ENCODE measurements at regions of chr19 and their contacts with region 1.

Region 1: GRCh38 chr19:8389891-8390616 is at the start of gene RAB11B:
- DNase-seq: peak; percentile 100
- ATAC-seq: peak; percentile 93
- H3K4me3 ChIP-seq: peak within 1 kb of the TSS; percentile 62 to 95
- H3K27ac ChIP-seq: peak within 1 kb of the TSS; percentile 100
- H3K4me1 ChIP-seq: peaks cover 6 to 25% of the 10 kb centered on the region in 2 experiments; a peak in 3 of 4 replicates
- H3K27me3 ChIP-seq: no peaks in the 10 kb centered on the region
- CTCF ChIP-seq: no peak
- POLR2A ChIP-seq: no peak
- RAD21 ChIP-seq: no peak
- total RNA-seq, gene RAB11B: 140 TPM

Region 2: GRCh38 chr19:8363803-8364771 is 26.0 kb before region 1 on chr19 and contains the start of gene ANGPTL4:
- CTCF ChIA-PET with region 1: no interaction called
- POLR2A ChIA-PET with region 1: interaction called, 12 read pairs
- RAD21 ChIA-PET with region 1: no interaction called
- intact Hi-C with region 1: loop called (anchors 1 kb)
- DNase-seq: peak; percentile 63
- ATAC-seq: peak; percentile 67
- H3K4me3 ChIP-seq: peak within 1 kb of the TSS; percentile 68 to 83
- H3K27ac ChIP-seq: peak within 1 kb of the TSS; percentile 90
- H3K4me1 ChIP-seq: peaks cover 54 to 84% of the 10 kb centered on the region in 2 experiments
- H3K27me3 ChIP-seq: no peaks in the 10 kb centered on the region
- CTCF ChIP-seq: peak in 2 of 3 experiments; percentile 30 to 38; a peak in 2 of 6 replicates
- POLR2A ChIP-seq: peak; percentile 92
- RAD21 ChIP-seq: no peak
- total RNA-seq, gene ANGPTL4: 54.8 TPM

Region 3: DNA sequence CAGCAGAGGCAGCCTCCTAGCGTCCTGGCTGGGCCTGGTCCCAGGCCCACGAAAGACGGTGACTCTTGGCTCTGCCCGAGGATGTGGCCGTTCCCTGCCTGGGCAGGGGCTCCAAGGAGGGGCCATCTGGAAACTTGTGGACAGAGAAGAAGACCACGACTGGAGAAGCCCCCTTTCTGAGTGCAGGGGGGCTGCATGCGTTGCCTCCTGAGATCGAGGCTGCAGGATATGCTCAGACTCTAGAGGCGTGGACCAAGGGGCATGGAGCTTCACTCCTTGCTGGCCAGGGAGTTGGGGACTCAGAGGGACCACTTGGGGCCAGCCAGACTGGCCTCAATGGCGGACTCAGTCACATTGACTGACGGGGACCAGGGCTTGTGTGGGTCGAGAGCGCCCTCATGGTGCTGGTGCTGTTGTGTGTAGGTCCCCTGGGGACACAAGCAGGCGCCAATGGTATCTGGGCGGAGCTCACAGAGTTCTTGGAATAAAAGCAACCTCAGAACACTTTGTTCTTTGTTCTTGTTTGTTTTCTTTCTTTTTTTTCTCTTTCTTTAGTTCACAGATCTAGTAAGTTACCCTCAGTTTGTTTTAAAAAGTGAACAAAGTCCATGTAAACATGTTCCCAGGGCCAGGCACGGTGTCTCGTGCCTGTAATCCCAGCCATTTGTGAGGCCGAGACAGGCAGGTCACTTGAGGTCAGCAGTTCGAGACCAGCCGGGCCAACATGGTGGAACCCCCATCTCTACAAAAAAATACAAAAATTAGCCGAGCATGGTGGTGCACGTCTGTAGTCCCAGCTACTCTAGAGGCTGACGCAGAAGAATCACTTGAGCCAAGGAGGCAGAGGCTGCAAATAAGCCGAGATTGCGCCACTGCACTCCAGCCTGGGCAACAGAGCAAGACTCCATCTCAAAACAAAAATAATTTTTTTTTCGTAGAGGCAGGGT is 15.9 kb before region 1 on chr19:
- CTCF ChIA-PET with region 1: interaction called, 6 read pairs
- POLR2A ChIA-PET with region 1: interaction called, 12 read pairs
- RAD21 ChIA-PET with region 1: no interaction called
- intact Hi-C with region 1: no loop called
- DNase-seq: no peak
- ATAC-seq: peak; percentile 52; the same call in 1 of the 2 replicates
- H3K4me3 ChIP-seq: no peak overlapping the region
- H3K27ac ChIP-seq: no peak overlapping the region
- H3K4me1 ChIP-seq: no peaks in the 10 kb centered on the region
- H3K27me3 ChIP-seq: no peaks in the 10 kb centered on the region
- CTCF ChIP-seq: no peak
- POLR2A ChIP-seq: no peak
- RAD21 ChIP-seq: peak; percentile 31; the same call in 1 of the 2 replicates

Region 4: GRCh38 chr19:8412783-8413628 is 23.0 kb after region 1 on chr19 and contains the start of gene MARCHF2:
- CTCF ChIA-PET with region 1: interaction called, 5 read pairs
- POLR2A ChIA-PET with region 1: interaction called, 20 read pairs
- RAD21 ChIA-PET with region 1: no interaction called
- intact Hi-C with region 1: no loop called
- DNase-seq: peak; percentile 90
- ATAC-seq: peak; percentile 99
- H3K4me3 ChIP-seq: peak within 1 kb of the TSS; percentile 66 to 67
- H3K27ac ChIP-seq: peak within 1 kb of the TSS; percentile 57
- H3K4me1 ChIP-seq: peaks cover 23 to 24% of the 10 kb centered on the region in 2 experiments
- H3K27me3 ChIP-seq: no peaks in the 10 kb centered on the region
- CTCF ChIP-seq: peak; percentile 45 to 63 (median 48); a peak in 5 of 6 replicates
- POLR2A ChIP-seq: no peak
- RAD21 ChIP-seq: peak; percentile 62
- total RNA-seq, gene MARCHF2: 22.5 TPM

Region 5: DNA sequence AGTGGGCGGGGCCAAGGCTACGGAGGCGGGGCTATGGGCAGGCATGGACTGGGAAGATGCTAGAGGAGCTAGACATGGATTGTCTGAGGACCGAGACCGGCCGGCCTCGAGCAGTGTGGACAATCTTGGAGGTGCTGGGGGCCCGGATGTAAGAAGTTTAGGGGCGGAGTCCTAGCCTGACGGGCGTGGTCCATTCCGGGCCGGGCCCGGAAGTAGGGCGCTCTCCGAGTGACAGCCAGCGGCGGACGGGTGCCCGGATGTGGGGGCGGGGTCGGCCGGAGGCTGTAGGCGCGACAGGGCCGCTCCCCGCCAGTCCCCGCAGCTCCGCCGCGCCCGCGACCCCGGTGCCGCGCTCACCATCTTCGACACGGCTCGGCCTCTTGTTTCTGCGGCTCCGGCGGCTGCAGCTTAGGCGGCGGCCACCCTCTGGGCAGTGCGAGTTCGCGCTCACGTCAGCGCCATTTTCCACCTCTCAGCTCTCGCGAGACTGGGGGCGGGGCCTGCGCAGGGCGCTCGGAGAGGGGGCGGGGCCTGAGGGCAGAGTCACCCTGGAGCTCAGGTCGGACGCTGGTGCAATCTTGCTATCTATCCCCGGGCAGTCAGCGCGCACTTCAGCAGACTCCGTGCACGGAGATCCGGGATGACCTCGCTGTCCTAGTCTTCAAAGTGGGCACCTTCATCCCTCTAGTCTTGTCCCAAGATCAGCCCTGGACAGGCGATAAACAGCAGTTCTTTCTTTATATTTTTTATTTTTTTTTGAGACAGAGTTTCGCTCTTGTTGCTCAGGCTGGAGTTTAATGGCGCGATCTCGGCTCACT is 123.8 kb after region 1 on chr19 and contains the start of gene ZNF414:
- CTCF ChIA-PET with region 1: no interaction called
- POLR2A ChIA-PET with region 1: interaction called, 10 read pairs
- RAD21 ChIA-PET with region 1: no interaction called
- intact Hi-C with region 1: no loop called
- DNase-seq: peak; percentile 97
- ATAC-seq: peak; percentile 85
- H3K4me3 ChIP-seq: peak within 1 kb of the TSS; percentile 59 to 78
- H3K27ac ChIP-seq: peak within 1 kb of the TSS; percentile 95
- H3K4me1 ChIP-seq: peaks cover 21 to 41% of the 10 kb centered on the region in 2 experiments
- H3K27me3 ChIP-seq: no peaks in the 10 kb centered on the region
- CTCF ChIP-seq: no peak
- POLR2A ChIP-seq: peak; percentile 94
- RAD21 ChIP-seq: no peak
- total RNA-seq, gene ZNF414: 31.9 TPM